Cardiac septum (tissue), 1 donor: ENCODE measurements at regions of chr9 and their contacts with region 1.

Region 1: GRCh38 chr9:19102631-19103345 is at the start of gene HAUS6:
- DNase-seq: peak; percentile 98
- total RNA-seq, gene HAUS6: 6.4 TPM

Region 2: GRCh38 chr9:19048966-19049916 is 53.5 kb before region 1 on chr9 and contains the start of gene RRAGA:
- intact Hi-C with region 1: loop called (anchors 1 kb)
- DNase-seq: peak; percentile 96
- total RNA-seq, gene RRAGA: 86.6 TPM

Region 3: GRCh38 chr9:19127881-19128500 is 25.2 kb after region 1 on chr9:
- intact Hi-C with region 1: loop called (anchors 2 kb)
- DNase-seq: no peak

Region 4: DNA sequence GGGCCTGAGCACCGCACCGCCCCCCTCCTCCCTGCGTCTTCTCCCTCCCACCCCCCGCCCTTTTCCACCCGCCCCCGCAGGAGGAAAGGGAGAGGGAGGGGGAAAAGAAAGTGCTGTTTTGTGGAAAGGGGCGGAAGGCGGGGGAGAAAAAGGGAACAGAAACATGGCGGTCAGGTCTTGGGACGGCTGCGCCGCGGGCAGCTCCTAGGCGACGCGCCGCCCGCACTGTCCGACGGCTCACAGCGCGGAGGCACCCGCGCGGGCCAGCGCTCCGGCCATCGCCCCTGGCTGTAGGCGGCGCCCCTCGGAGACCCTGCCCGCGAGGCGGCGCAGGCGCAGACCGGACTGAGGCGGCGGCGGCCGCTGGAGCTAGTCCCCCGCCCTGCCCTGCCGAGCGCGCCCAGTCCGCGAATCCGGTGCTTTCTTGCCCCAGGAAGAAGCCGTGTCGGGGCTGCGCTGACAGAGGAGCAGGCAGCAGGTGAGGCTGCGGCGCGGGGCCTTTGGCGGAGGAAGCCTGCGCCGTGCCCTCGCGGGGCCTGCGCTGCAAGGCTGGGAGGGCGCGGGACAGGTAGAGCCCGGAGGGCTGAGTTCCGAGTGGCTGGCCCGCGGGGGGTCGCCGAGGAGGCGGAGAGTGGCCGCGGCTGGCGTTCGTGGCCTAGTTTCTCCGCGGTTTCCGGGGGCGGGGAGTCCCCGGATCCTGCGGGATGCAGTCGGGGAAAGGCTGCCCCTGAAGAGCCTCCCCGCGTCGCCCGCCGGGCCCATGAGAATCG is 127.8 kb after region 1 on chr9 and contains the start of gene DENND4C:
- intact Hi-C with region 1: loop called (anchors 5 kb)
- DNase-seq: peak; percentile 91
- total RNA-seq, gene DENND4C: 21.4 TPM

Region 5: DNA sequence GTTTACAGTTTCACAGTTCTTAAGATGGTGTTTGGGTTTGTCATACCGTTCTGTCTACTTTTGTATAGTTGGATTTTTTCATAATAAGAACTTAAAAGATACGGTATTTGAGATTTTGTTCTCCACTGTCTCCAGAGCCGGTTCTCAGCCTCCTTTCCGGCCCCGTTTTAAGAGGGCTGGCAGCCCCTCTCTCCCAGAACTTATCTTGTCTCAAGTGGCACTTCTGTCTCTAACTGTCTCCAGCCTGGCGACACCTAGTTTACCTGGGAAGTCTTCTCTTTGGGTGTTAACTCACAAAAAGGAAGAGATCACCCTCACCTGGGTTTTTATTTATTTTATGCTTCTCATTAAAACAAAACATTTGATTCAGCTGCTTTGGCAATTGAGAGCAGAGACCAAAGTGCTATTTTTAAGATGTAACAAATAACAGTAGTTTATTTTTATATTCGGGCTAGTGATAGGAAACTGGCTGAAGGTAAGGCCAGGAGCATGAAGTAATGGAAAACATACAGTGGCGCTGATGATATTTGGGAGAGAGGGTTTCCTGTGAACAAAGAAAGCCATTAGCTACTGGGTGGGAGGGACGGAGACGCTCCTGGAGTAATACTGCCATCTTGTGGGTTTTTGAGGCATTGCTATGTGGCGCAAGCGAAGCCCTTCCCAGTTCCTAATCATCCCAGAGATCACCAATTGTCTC is 354.4 kb after region 1 on chr9:
- intact Hi-C with region 1: loop called (anchors 10 kb)
- DNase-seq: no peak